ENCODE measurements at regions of chr7 and their contacts with region 1.

Region 1: GRCh38 chr7:152675759-152676636 is at the start of gene XRCC2:
- DNase-seq: peak; percentile 99
- ATAC-seq: peak; percentile 94
- H3K4me3 Mint-ChIP-seq: peak within 1 kb of the TSS; percentile 94
- H3K27ac Mint-ChIP-seq: peak within 1 kb of the TSS; percentile 93
- H3K4me1 Mint-ChIP-seq: peaks cover 11% of the 10 kb centered on the region
- H3K27me3 Mint-ChIP-seq: no peaks in the 10 kb centered on the region
- CTCF ChIP-seq: no peak
- total RNA-seq, gene XRCC2: 1.7 and 2.3 TPM in 2 replicates

Region 2: GRCh38 chr7:151286148-151286547 is 1389.8 kb before region 1 on chr7:
- CTCF ChIA-PET with region 1: no interaction called
- POLR2A ChIA-PET with region 1: no interaction called
- intact Hi-C with region 1: no loop called
- DNase-seq: no peak
- ATAC-seq: no peak
- H3K4me3 Mint-ChIP-seq: no peak overlapping the region
- H3K27ac Mint-ChIP-seq: no peak overlapping the region
- H3K4me1 Mint-ChIP-seq: no peaks in the 10 kb centered on the region
- H3K27me3 Mint-ChIP-seq: peaks cover 28% of the 10 kb centered on the region
- CTCF ChIP-seq: no peak

Region 3: DNA sequence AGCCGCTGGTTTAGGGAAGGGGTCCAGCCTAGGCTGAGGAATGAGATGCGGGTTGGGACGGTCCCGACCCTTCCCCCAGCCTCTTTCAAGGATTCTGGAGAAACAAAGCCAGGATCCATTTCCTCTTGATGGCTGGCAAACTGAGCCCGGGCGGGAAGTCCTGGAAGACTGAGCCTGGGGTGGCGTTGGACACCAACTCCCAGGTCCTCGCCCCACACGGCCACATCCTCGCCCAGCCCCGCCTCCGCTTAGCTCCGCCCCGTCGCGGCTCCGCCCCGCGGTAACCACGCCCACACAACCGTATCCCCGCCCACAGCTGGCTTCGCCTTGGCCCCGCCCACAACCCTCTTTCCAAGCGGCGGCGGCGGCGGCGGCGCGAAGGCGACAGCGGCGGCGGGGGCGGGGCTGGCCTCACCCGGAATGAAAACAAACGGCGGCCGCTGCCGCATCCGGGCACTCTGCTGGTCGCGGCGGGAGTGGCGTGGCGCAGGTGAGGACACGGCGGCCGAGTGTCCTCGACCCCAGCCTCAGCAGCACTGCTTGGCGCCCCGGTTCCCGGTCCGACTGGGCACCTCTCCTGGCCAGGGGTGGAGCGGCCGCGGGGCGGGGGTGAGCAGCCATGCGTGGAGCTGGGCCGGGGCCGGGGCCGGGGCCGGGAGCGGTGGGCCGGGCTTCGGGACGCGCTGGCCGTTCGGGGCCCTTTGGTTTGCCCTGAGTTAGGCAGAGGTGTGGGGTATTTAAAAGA is 1334.5 kb before region 1 on chr7 and contains the start of gene NUB1:
- CTCF ChIA-PET with region 1: no interaction called
- POLR2A ChIA-PET with region 1: no interaction called
- intact Hi-C with region 1: loop called (anchors 10 kb)
- DNase-seq: peak; percentile 99
- ATAC-seq: peak; percentile 90
- H3K4me3 Mint-ChIP-seq: peak within 1 kb of the TSS; percentile 86
- H3K27ac Mint-ChIP-seq: peak within 1 kb of the TSS; percentile 93
- H3K4me1 Mint-ChIP-seq: peaks cover 52% of the 10 kb centered on the region
- H3K27me3 Mint-ChIP-seq: no peaks in the 10 kb centered on the region
- CTCF ChIP-seq: no peak
- total RNA-seq, gene NUB1: 47.5 and 52.7 TPM in 2 replicates

Region 4: DNA sequence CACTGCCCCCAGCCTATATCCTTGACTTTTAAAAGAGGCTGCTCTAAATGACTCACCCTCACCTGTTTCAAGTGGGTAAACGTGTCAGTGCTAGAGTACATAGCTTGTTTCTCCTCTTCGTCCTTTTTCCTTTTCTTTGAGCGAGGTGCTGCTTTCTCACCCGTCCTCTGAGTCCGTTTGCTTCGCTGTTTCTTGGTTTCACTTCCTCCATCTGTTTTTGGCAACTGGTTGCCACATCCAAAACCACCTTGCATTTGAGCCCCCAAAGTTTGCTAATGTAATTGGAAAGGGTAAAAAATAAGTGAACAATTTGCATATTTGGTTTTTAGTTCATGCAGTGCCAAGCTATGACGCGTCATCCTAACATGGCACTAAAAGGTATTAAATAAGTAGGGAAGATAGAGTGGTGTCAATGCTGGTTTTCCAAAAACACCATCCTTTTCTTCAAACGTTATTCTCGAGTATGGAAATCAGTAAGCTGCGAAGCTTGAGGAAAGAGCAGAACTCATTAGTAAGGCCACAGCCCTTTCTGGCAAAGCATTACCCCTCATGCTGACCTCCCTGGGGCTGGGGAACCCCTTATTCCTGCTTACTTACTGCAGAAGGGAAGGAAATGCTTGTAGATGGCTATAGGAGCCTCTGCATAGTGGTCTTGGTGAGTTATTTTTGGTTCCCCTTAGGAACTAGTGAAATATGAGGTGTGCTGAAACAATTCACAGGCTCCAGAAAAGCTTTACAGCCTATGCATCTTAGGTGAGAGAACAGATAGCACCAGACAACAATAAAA is 517.0 kb before region 1 on chr7:
- CTCF ChIA-PET with region 1: no interaction called
- POLR2A ChIA-PET with region 1: no interaction called
- intact Hi-C with region 1: loop called (anchors 2 kb)
- DNase-seq: peak; percentile 34
- ATAC-seq: peak; percentile 86
- H3K4me3 Mint-ChIP-seq: peak overlapping the region; percentile 39
- H3K27ac Mint-ChIP-seq: peak overlapping the region; percentile 83
- H3K4me1 Mint-ChIP-seq: peaks cover 41% of the 10 kb centered on the region
- H3K27me3 Mint-ChIP-seq: no peaks in the 10 kb centered on the region
- CTCF ChIP-seq: no peak

Region 5: GRCh38 chr7:152436111-152436930 is 239.7 kb before region 1 on chr7:
- CTCF ChIA-PET with region 1: no interaction called
- POLR2A ChIA-PET with region 1: no interaction called
- intact Hi-C with region 1: loop called (anchors 1 kb)
- DNase-seq: peak; percentile 85
- ATAC-seq: peak; percentile 64
- H3K4me3 Mint-ChIP-seq: peak overlapping the region; percentile 83
- H3K27ac Mint-ChIP-seq: peak overlapping the region; percentile 84
- H3K4me1 Mint-ChIP-seq: peaks cover 29% of the 10 kb centered on the region
- H3K27me3 Mint-ChIP-seq: no peaks in the 10 kb centered on the region
- CTCF ChIP-seq: no peak

Region 6: GRCh38 chr7:152759949-152760853 is 84.2 kb after region 1 on chr7:
- CTCF ChIA-PET with region 1: no interaction called
- POLR2A ChIA-PET with region 1: no interaction called
- intact Hi-C with region 1: loop called (anchors 1 kb)
- DNase-seq: no peak
- ATAC-seq: peak; percentile 17
- H3K4me3 Mint-ChIP-seq: peak overlapping the region; percentile 91
- H3K27ac Mint-ChIP-seq: peak overlapping the region; percentile 77
- H3K4me1 Mint-ChIP-seq: peaks cover 21% of the 10 kb centered on the region
- H3K27me3 Mint-ChIP-seq: no peaks in the 10 kb centered on the region
- CTCF ChIP-seq: no peak

Measured in activated B cell treated with CpG ODN at 0.5 μM for 24 hours (primary cell).